Activated CD4-positive, alpha-beta T cell treated with anti-CD3 and anti-CD28 coated beads for 36 hours (primary cell): ENCODE measurements at regions of chr14 and their contacts with region 1.

Region 1: GRCh38 chr14:97306760-97307246 is 509.6 kb downstream of the VRK1 start:
- DNase-seq: peak; percentile 41
- ATAC-seq: peak; percentile 85
- H3K4me3 Mint-ChIP-seq: no peak overlapping the region
- H3K27ac Mint-ChIP-seq: peak overlapping the region; percentile 90
- H3K4me1 Mint-ChIP-seq: peaks cover 31% of the 10 kb centered on the region
- H3K27me3 Mint-ChIP-seq: no peaks in the 10 kb centered on the region

Region 2: DNA sequence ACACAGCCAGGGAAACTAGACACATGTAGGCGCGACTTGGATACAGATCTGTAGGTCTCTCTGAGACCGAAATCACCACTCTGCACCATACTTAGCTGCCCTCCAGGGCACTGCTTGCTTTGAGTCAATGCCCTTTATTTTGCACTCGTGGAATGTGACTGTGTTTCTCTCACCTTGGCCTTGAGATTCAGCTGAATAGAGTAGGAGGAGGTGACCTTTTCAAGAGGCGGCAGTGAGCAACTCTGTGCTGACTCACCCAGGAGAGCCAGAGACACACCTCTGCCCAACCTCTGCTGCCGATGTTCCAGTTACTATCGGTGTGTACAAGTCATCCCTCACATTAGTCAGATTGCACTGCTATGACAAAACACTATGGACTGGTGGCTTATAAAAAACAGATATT is 73.7 kb after region 1 on chr14:
- CTCF ChIA-PET with region 1: no interaction called
- POLR2A ChIA-PET with region 1: interaction called, 9 read pairs
- intact Hi-C with region 1: loop called (anchors 1 to 2 kb)
- DNase-seq: peak; percentile 88
- ATAC-seq: peak; percentile 99
- H3K4me3 Mint-ChIP-seq: no peak overlapping the region
- H3K27ac Mint-ChIP-seq: no peak overlapping the region
- H3K4me1 Mint-ChIP-seq: peaks cover 46% of the 10 kb centered on the region
- H3K27me3 Mint-ChIP-seq: no peaks in the 10 kb centered on the region

Region 3: DNA sequence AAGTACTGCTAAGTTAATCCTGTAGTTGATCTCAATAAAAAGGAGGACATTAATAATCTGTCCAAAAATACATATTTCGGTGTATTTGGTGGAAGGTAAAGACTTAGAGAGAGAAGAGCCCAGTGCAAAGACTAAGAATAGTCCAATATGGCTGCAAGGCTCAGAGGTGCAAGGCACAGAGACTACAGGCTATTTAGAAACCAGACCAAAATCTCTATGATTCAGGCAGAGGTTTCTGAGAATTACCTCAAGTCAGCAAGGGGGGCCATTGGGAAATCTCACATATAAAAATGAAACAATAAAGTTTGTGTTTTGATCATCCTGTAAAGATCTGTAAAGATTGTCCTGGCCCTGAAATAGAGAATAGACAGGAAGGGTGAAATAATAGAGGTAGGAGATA is 663.4 kb after region 1 on chr14:
- CTCF ChIA-PET with region 1: no interaction called
- POLR2A ChIA-PET with region 1: no interaction called
- intact Hi-C with region 1: loop called in 1 of 2 experiments (anchors 5 kb)
- DNase-seq: no peak
- ATAC-seq: peak; percentile 59
- H3K4me3 Mint-ChIP-seq: no peak overlapping the region
- H3K27ac Mint-ChIP-seq: peak overlapping the region; percentile 85
- H3K4me1 Mint-ChIP-seq: peaks cover 87% of the 10 kb centered on the region
- H3K27me3 Mint-ChIP-seq: no peaks in the 10 kb centered on the region